H1 (cell line): ENCODE measurements at regions of chr5 and their contacts with region 1.

Region 1: GRCh38 chr5:158074992-158075769 is 216.2 kb upstream of the CLINT1 start:
- DNase-seq: peak; percentile 17 to 69
- H3K4me3 ChIP-seq: no peak overlapping the region
- H3K27ac ChIP-seq: 0 out of 2 replicates have a peak overlapping the region, but pooled peaks have one; percentile 20
- H3K4me1 ChIP-seq: peaks cover 0 to 3% (median 3%) of the 10 kb centered on the region in 4 experiments; a peak in 3 of 7 replicates
- H3K27me3 ChIP-seq: no peaks in the 10 kb centered on the region
- CTCF ChIP-seq: peak; percentile 67 to 81 (median 72)
- EP300 ChIP-seq: peak in 1 of 2 experiments; percentile 54; a peak in 1 of 3 replicates
- POLR2A ChIP-seq: no peak
- RAD21 ChIP-seq: peak; percentile 82 to 83

Region 2: DNA sequence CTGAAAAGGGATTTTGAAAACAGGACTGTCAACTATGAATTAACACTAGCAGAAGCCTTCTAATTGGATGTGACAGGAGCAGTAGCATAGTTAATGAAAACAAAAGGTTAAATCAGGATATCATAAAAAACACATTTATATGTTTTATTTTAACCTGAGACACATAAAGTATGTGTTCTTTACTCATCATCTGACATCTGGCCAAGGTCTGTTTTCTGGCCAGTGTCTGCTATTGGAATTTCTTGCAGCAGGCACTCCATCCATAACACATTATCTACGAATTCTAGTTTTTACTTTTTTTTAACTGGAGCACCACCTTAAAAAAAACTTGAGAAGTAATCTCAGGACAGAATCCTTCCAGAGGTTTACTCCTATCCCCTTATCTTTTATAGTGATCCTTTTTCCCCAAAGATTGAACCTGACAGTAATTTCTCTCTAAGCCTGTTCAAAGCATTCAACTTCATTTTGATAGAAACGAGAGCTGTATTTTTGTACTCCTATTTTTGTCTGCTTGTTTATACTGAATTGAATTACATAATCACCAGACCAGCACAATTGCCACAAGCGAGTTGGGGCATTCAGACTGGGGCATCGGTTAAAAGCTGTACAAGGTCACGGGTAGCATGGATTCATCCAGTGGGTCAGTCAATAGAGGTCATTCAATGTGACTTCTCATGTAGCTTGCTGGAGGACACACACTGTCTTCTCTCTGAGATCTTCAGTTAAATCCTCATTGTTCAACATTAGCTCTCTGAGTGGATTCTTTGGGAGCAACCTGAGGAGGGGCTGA is 10.7 kb before region 1 on chr5:
- CTCF ChIA-PET with region 1: interaction called, 31 read pairs
- POLR2A ChIA-PET with region 1: no interaction called
- DNase-seq: no peak
- H3K4me3 ChIP-seq: no peak overlapping the region
- H3K27ac ChIP-seq: no peak overlapping the region
- H3K4me1 ChIP-seq: no peaks in the 10 kb centered on the region
- H3K27me3 ChIP-seq: no peaks in the 10 kb centered on the region
- CTCF ChIP-seq: no peak
- EP300 ChIP-seq: no peak
- POLR2A ChIP-seq: no peak
- RAD21 ChIP-seq: no peak

Region 3: DNA sequence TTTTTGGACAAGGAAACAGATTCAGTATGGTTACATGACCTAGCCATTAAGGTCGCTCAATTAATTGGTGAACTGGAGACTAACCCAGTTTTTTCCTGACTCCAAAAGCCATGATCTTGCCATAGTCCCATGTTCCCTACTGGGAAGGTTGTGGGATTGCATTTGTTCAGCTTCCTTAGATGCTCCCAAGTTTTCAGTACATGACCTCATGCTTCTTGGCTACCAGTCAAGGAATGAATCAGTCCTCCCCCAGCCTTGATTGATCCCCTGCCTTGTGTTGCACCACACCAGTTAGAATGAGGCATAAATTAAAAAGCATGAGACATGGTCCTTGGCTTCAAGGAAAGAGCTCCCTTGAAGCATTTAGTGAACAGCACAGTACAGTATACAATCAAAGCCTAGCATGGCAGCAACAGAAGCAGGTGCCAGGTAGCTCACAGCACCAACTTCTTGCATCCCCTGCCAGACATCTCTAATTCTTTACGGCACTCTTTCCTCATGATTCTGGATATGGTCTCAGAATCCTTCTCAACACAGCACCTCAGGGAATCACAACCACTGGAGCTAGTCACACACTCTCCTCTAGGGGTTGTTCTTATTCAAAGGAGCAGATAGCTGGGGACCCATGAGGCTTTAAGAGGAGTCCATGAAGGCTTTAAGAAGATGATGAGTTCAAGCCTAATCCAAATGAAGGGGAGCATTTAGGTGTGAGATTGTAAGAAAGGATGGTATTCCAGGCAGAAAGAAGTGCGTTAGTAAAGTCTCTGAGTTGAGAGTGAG is 79.2 kb after region 1 on chr5:
- CTCF ChIA-PET with region 1: interaction called, 11 read pairs
- POLR2A ChIA-PET with region 1: no interaction called
- DNase-seq: no peak
- H3K4me3 ChIP-seq: no peak overlapping the region
- H3K27ac ChIP-seq: no peak overlapping the region
- H3K4me1 ChIP-seq: no peaks in the 10 kb centered on the region
- H3K27me3 ChIP-seq: no peaks in the 10 kb centered on the region
- CTCF ChIP-seq: no peak
- EP300 ChIP-seq: no peak
- POLR2A ChIP-seq: no peak
- RAD21 ChIP-seq: no peak; a peak in 1 of 4 replicates

Region 4: DNA sequence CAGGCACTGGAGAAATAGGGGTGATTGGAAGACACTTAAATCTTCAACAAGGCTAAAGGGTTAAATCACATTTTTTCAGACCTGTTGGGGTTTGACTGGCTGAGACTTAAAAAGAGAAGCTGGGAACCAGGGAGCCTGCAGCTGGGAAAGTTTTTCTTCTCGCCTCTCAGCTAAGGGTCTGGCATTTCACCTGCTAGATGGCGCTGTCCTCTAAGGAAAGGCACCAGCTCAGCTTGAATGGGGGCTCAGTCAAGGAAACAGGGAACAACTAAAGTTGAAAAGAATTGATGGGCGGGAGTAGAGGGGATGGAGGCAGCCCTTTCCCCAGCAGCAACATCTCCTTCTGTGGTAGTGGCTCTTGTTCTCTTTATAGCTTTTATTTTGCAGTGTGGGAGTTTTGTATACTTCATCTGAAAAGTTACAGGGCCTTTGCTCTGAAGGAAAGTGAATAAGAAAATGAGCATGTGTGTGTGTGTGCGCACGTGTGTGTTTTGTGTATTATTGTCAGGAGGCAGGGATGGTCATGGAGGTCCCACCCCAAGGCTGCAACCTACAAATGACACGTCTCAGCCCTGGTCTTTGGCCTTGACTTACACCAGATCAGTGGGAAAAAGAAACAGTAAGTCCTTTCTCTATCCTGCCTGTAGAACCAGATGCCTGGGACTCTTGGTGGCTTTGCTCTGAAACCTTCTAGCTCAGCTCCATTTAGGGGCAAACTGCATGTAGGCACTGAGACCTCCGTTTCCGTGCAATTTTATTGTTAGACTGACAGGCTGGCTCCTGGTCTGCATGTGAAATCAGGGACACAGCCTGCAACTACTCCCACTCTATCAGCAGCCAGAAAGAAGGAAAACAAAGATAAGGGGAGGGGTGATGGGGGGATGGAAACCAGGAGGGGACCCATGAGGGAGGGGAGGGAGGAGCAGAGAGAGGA is 100.0 kb after region 1 on chr5:
- CTCF ChIA-PET with region 1: interaction called, 15 read pairs
- POLR2A ChIA-PET with region 1: no interaction called
- DNase-seq: peak; percentile 73 to 90
- H3K4me3 ChIP-seq: no peak overlapping the region
- H3K27ac ChIP-seq: no peak overlapping the region
- H3K4me1 ChIP-seq: peaks cover 0 to 6% (median 4%) of the 10 kb centered on the region in 4 experiments; a peak in 4 of 7 replicates
- H3K27me3 ChIP-seq: no peaks in the 10 kb centered on the region
- CTCF ChIP-seq: peak; percentile 72 to 88 (median 85)
- EP300 ChIP-seq: no peak
- POLR2A ChIP-seq: no peak
- RAD21 ChIP-seq: peak; percentile 99